AG04450 (cell line): ENCODE measurements at regions of chr10 and their contacts with region 1.

Region 1: DNA sequence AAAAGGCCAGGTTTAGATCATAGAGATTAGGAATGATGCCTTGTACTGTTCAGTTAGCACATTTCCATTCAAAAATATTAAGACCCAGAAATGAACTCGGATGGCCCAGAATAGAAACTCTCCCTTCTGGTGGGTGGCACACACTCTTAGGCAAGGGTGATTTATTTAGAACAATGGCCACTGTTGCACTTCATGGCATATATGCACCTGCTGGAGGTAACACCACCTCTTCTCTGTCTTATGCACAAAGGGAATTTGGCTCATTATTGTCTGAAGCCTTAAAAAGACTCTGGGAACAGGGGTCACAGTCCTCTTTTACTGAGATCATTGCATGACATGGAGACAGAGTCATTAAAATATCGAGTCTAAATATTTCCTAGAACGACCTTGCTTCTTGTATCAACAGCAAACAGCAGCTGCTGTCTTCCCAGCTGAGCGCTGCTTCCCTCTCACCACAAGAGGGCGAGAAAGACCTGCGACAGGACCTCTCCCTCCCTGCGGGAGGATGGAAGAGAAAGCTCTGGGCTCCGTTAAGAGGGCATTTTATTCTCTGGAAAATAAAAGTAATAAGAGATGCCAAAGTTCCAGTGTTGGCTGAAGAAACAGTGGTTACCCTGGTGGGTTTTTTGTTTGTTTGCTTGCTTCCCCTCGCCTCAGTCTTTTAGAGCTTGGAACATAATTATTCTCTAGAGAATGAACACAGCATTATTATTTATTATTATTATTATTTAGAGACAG is 13.6 kb upstream of the BAMBI start:
- DNase-seq: peak; percentile 73
- H3K4me3 ChIP-seq: no peak overlapping the region
- H3K27ac ChIP-seq: no peak overlapping the region
- H3K27me3 ChIP-seq: peaks cover 13% of the 10 kb centered on the region
- CTCF ChIP-seq: peak; percentile 99

Region 2: GRCh38 chr10:27671821-27672220 is 991.9 kb before region 1 on chr10:
- CTCF ChIA-PET with region 1: no interaction called
- POLR2A ChIA-PET with region 1: no interaction called
- DNase-seq: no peak
- H3K4me3 ChIP-seq: no peak overlapping the region
- H3K27ac ChIP-seq: no peak overlapping the region
- H3K27me3 ChIP-seq: no peaks in the 10 kb centered on the region
- CTCF ChIP-seq: no peak

Region 3: DNA sequence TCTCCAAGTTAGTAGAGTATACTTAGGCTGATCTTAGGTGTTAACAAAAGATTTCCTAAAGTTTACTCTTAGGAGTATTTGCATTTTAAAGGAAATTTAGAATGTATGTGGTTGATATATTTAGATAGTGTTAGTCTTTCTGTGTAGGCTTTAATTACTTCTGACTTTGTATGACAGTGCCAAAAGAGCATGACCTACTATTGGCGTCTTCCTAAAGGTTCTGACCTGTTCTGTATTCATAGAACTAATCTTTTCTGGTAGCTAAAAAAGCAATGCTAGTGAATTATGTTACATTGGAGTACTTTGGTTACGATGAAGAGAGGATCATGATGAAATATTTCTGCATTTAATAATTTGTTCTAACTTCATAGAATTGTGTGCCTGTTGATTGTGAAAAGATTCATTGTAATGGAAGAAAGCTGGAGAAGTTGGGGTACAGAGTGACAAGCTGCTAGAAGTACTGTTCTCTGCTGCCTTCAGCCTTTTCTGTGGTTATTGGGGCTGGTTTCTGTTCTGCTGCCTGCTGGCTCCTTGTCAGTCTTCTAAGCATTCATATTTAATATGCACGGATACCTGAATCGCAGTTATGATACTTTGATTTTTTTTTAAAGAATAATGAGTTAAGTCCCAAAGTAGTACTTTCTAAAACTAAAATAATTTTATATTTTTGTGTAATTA is 117.6 kb before region 1 on chr10:
- CTCF ChIA-PET with region 1: no interaction called
- POLR2A ChIA-PET with region 1: no interaction called
- DNase-seq: no peak
- H3K4me3 ChIP-seq: no peak overlapping the region
- H3K27ac ChIP-seq: no peak overlapping the region
- H3K27me3 ChIP-seq: no peaks in the 10 kb centered on the region
- CTCF ChIP-seq: no peak

Region 4: DNA sequence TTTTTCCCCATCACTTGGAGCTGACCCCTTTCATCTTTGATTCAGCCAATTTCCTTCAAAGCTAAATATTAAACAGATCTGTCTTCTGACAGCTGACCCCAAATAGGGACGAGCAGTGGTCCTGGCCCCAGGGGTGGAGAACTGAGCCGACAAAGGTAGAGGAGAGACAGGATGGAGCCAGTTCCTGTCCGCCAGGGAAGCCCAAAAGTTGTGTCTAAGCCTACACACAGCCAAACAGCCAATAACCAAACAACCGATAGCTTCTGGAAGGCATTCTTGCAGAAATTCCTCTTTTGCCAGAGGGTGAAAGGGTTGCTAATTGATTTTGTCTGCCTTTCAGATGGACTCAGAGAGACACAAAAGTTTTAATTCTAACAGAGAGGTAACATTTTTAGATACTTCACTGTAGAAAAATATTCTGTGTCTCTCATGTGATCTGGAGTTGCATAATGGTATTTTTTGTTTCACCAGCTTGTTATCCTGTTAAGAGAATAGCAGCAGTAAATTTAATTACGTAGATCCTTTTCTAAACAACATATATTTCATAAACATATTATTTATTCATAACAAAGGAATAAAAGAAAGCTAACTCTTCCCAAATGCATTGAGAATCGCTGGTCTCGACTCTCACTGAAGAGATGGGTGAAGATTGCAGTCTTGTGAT is 463.4 kb after region 1 on chr10:
- CTCF ChIA-PET with region 1: interaction called, 68 read pairs
- POLR2A ChIA-PET with region 1: interaction called, 3 read pairs
- DNase-seq: no peak
- H3K4me3 ChIP-seq: no peak overlapping the region
- H3K27ac ChIP-seq: no peak overlapping the region
- H3K27me3 ChIP-seq: peaks cover 3% of the 10 kb centered on the region
- CTCF ChIP-seq: no peak

Region 5: GRCh38 chr10:29204070-29204800 is 540.5 kb after region 1 on chr10:
- CTCF ChIA-PET with region 1: interaction called, 11 read pairs
- POLR2A ChIA-PET with region 1: no interaction called
- DNase-seq: no peak
- H3K4me3 ChIP-seq: no peak overlapping the region
- H3K27ac ChIP-seq: no peak overlapping the region
- H3K27me3 ChIP-seq: peaks cover 15% of the 10 kb centered on the region
- CTCF ChIP-seq: no peak

Region 6: GRCh38 chr10:29304264-29305030 is 640.7 kb after region 1 on chr10:
- CTCF ChIA-PET with region 1: interaction called, 90 read pairs
- POLR2A ChIA-PET with region 1: no interaction called
- DNase-seq: peak; percentile 45
- H3K4me3 ChIP-seq: no peak overlapping the region
- H3K27ac ChIP-seq: no peak overlapping the region
- H3K27me3 ChIP-seq: no peaks in the 10 kb centered on the region
- CTCF ChIP-seq: peak; percentile 81

Region 7: DNA sequence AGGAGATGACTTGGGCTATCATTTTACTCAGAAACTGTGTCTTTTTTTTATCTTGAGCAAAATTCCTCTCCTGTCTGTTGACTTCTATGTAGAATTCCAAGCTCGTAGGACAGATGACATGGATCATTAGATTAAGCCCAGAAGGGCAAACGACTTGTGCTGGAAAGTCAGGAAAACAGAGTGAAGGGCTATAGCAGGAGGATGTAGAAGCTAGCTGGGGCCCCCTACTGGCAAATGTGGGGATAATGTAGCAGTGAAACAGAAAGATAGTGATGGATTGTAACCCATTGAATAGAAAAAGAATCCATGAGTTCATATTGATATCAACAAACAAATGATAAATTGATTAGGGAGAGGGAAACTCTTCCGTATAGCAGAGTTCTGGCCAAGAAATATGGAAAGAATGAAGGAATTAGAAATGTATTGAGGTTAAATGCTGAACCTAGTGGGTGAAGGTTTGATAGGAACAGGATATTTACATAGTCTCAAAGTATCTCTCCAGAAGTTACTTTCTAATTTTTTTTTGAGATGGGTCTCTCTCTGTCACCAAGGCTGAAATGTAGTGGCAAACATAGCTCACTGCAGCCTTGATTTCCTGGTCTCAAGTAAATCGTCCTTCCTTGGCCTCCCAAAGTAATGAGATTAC is 728.8 kb after region 1 on chr10:
- CTCF ChIA-PET with region 1: interaction called, 25 read pairs
- POLR2A ChIA-PET with region 1: no interaction called
- DNase-seq: no peak
- H3K4me3 ChIP-seq: no peak overlapping the region
- H3K27ac ChIP-seq: no peak overlapping the region
- H3K27me3 ChIP-seq: peaks cover 38% of the 10 kb centered on the region
- CTCF ChIP-seq: peak; percentile 90